A673 (cell line): ENCODE measurements at regions of chr16 and their contacts with region 1.

Region 1: DNA sequence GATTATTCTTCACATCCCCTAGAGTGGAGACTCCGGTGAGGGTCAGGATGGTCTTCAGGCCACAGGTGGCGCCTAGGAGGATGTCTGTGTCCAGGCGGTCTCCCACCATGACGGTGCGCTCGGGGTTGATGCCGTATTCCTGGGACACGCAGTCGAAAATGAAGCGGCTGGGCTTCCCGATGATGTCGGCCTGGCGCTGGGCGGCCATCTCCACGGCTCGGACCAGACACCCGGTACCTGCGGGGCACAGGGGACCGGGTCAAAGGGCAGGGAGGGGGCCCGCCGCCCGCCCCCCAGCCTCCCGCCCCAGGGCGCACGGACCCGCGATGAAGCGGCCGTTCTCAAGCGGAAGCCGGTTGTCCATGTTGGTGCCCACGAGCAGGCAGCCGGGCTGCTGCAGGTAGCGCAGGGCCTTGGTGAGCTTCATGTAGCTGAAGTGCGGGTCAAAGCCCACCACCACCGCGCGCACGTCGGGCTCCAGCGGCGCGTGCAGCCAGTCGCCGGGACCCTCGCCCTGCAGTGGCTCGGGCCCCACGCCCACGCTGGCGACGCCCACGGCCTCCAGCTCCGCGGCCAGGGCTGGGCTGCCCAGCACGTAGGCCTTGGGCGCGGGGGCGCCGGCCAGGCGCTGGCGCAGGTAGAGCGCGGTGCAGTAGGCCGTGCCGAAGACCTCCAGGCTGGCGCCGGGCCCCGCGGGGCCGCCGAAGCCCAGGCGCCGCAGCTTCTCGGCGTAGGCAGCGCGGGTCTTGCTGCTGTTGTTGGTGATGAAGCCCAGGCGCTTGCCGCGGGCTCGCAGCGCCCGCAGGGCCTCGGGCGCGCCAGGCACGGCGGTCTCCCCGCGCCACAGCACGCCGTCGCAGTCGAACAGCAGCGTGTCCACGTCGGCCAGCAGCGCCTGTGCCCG is 571 bp downstream of the PGP start:
- DNase-seq: peak; percentile 40
- H3K4me3 ChIP-seq: peak overlapping the region; percentile 91
- H3K27ac ChIP-seq: peak overlapping the region; percentile 64
- H3K4me1 ChIP-seq: peaks cover 11% of the 10 kb centered on the region
- H3K27me3 ChIP-seq: no peaks in the 10 kb centered on the region
- CTCF ChIP-seq: no peak

Region 2: DNA sequence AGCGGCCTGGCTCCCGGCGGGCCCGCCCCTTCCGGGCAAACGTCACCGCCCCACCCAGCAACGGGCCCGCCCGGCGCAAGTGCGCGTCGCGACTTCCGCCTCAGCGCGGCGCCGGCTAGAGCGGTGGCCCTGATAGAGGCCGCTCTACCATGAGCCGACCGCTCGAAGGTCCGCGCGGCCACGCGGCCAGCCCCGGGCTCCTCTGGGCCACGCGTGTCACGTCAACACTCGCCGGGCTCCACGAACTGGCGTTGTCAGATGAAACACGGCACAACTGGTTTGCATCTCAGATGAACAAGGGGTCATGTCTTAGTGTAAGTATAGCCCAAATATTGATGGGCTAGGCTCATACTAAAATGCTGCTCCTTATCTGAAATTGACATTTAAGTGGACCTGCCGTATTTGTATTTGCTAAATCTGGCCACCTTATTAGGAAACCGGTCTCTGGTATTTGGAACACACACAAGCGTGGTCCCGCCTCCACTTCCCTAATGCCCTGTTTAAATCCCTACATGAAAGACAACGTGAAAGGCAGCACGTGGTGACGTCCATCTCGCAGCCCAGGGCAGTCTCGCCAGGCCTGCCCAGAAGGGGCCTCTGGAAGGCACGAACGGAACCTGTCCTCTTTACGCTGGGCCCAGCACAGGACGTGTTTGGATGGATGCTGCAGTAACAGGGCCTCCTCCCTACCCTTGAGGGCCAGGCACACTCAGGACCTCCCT is 204.1 kb before region 1 on chr16 and contains the start of gene ZNF598:
- CTCF ChIA-PET with region 1: no interaction called
- POLR2A ChIA-PET with region 1: no interaction called
- intact Hi-C with region 1: loop called (anchors 10 kb)
- DNase-seq: peak; percentile 93
- H3K4me3 ChIP-seq: peak within 1 kb of the TSS; percentile 99
- H3K27ac ChIP-seq: peak within 1 kb of the TSS; percentile 93
- H3K4me1 ChIP-seq: peaks cover 38% of the 10 kb centered on the region
- H3K27me3 ChIP-seq: no peaks in the 10 kb centered on the region
- CTCF ChIP-seq: no peak
- total RNA-seq, gene ZNF598: 68.0 and 75.8 TPM in 2 replicates

Region 3: GRCh38 chr16:2238838-2239675 is 25.0 kb after region 1 on chr16:
- CTCF ChIA-PET with region 1: no interaction called
- POLR2A ChIA-PET with region 1: no interaction called
- intact Hi-C with region 1: no loop called
- DNase-seq: no peak
- H3K4me3 ChIP-seq: no peak overlapping the region
- H3K27ac ChIP-seq: no peak overlapping the region
- H3K4me1 ChIP-seq: no peaks in the 10 kb centered on the region
- H3K27me3 ChIP-seq: no peaks in the 10 kb centered on the region
- CTCF ChIP-seq: no peak

Region 4: GRCh38 chr16:2663553-2664546 is 449.8 kb after region 1 on chr16:
- CTCF ChIA-PET with region 1: no interaction called
- POLR2A ChIA-PET with region 1: no interaction called
- intact Hi-C with region 1: no loop called
- DNase-seq: peak; percentile 72
- H3K4me3 ChIP-seq: no peak overlapping the region
- H3K27ac ChIP-seq: peak overlapping the region; percentile 10
- H3K4me1 ChIP-seq: peaks cover 11% of the 10 kb centered on the region
- H3K27me3 ChIP-seq: no peaks in the 10 kb centered on the region
- CTCF ChIP-seq: no peak

Region 5: GRCh38 chr16:2686912-2687507 is 472.9 kb after region 1 on chr16:
- CTCF ChIA-PET with region 1: no interaction called
- POLR2A ChIA-PET with region 1: no interaction called
- intact Hi-C with region 1: no loop called
- DNase-seq: no peak
- H3K4me3 ChIP-seq: no peak overlapping the region
- H3K27ac ChIP-seq: no peak overlapping the region
- H3K4me1 ChIP-seq: no peaks in the 10 kb centered on the region
- H3K27me3 ChIP-seq: no peaks in the 10 kb centered on the region
- CTCF ChIP-seq: no peak